ENCODE measurements at regions of chr18 and their contacts with region 1.

Region 1: GRCh38 chr18:56314396-56314795 is 324.0 kb downstream of the TXNL1 start:
- DNase-seq: peak; percentile 18
- ATAC-seq: no peak
- H3K4me3 ChIP-seq: no peak overlapping the region
- H3K27ac ChIP-seq: no peak overlapping the region
- H3K4me1 ChIP-seq: peaks cover 5% of the 10 kb centered on the region
- H3K27me3 ChIP-seq: no peaks in the 10 kb centered on the region
- CTCF ChIP-seq: peak; percentile 45
- POLR2A ChIP-seq: no peak
- RAD21 ChIP-seq: peak; percentile 35

Region 2: GRCh38 chr18:55974521-55974920 is 339.9 kb before region 1 on chr18:
- CTCF ChIA-PET with region 1: no interaction called
- POLR2A ChIA-PET with region 1: no interaction called
- dilution Hi-C with region 1: no loop called
- in situ Hi-C with region 1: no loop called
- intact Hi-C with region 1: no loop called
- DNase-seq: no peak
- ATAC-seq: no peak
- H3K4me3 ChIP-seq: no peak overlapping the region
- H3K27ac ChIP-seq: no peak overlapping the region
- H3K4me1 ChIP-seq: no peaks in the 10 kb centered on the region
- H3K27me3 ChIP-seq: no peaks in the 10 kb centered on the region
- CTCF ChIP-seq: no peak
- POLR2A ChIP-seq: no peak
- RAD21 ChIP-seq: no peak

Region 3: DNA sequence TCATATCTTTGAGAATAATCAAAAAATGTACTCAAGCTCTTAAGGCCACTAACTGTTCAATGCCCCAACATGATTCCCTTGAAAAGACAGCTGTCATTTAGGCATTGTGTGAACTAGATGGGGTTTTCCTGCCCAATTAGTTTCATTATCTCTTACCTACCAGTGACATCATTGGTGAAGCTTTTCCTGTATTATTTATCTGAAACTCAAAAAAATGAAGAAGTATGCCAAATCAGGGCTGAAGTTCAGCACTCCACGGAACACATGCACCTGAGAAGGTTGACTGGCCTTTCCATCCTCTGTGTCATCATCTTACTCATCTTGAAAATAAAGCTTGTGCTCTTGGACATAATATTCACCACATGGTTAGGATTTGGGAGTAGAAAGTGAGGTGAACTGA is 197.6 kb after region 1 on chr18:
- CTCF ChIA-PET with region 1: no interaction called
- POLR2A ChIA-PET with region 1: interaction called, 16 read pairs
- dilution Hi-C with region 1: no loop called
- in situ Hi-C with region 1: no loop called
- intact Hi-C with region 1: no loop called
- DNase-seq: no peak
- ATAC-seq: no peak
- H3K4me3 ChIP-seq: no peak overlapping the region
- H3K27ac ChIP-seq: no peak overlapping the region
- H3K4me1 ChIP-seq: peaks cover 3% of the 10 kb centered on the region; the same call in 1 of the 2 replicates
- H3K27me3 ChIP-seq: peaks cover 4% of the 10 kb centered on the region; the same call in 1 of the 2 replicates
- CTCF ChIP-seq: no peak
- POLR2A ChIP-seq: no peak
- RAD21 ChIP-seq: no peak